Dendritic cell treated with granulocyte-macrophage colony-stimulating factor and Interleukin-4, amounts not matched to agents 40 ng/mL and 50 ng/mL, for 4 days (primary cell): ENCODE measurements at regions of chr13 and their contacts with region 1.

Region 1: GRCh38 chr13:58704953-58705352 is 1073.4 kb downstream of the PCDH17 start:
- H3K4me3 Mint-ChIP-seq: no peak overlapping the region
- H3K27ac Mint-ChIP-seq: peak overlapping the region; percentile 66
- H3K4me1 Mint-ChIP-seq: peaks cover 28% of the 10 kb centered on the region
- H3K27me3 Mint-ChIP-seq: peaks cover 9% of the 10 kb centered on the region

Region 2: GRCh38 chr13:58587183-58587582 is 117.8 kb before region 1 on chr13:
- intact Hi-C with region 1: loop called (anchors 10 kb)
- H3K4me3 Mint-ChIP-seq: no peak overlapping the region
- H3K27ac Mint-ChIP-seq: no peak overlapping the region
- H3K4me1 Mint-ChIP-seq: peaks cover 17% of the 10 kb centered on the region
- H3K27me3 Mint-ChIP-seq: no peaks in the 10 kb centered on the region